Breast epithelium (tissue), 4 donors: ENCODE measurements at regions of chr4 and their contacts with region 1.

Region 1: GRCh38 chr4:81816031-81816761 is 344.5 kb upstream of the RASGEF1B start:
- DNase-seq: no peak
- H3K4me3 ChIP-seq: no peak overlapping the region
- H3K27ac ChIP-seq: no peak overlapping the region
- H3K4me1 ChIP-seq: no peaks in the 10 kb centered on the region
- H3K27me3 ChIP-seq: no peaks in the 10 kb centered on the region
- CTCF ChIP-seq: no peak
- POLR2A ChIP-seq: no peak

Region 2: GRCh38 chr4:81796790-81797528 is 19.2 kb before region 1 on chr4:
- intact Hi-C with region 1: loop called (anchors 2 kb)
- DNase-seq: no peak
- H3K4me3 ChIP-seq: no peak overlapping the region
- H3K27ac ChIP-seq: no peak overlapping the region
- H3K4me1 ChIP-seq: no peaks in the 10 kb centered on the region
- H3K27me3 ChIP-seq: no peaks in the 10 kb centered on the region
- CTCF ChIP-seq: no peak
- POLR2A ChIP-seq: no peak